Endothelial cell of umbilical vein (primary cell): ENCODE measurements at regions of chr15 and their contacts with region 1.

Region 1: DNA sequence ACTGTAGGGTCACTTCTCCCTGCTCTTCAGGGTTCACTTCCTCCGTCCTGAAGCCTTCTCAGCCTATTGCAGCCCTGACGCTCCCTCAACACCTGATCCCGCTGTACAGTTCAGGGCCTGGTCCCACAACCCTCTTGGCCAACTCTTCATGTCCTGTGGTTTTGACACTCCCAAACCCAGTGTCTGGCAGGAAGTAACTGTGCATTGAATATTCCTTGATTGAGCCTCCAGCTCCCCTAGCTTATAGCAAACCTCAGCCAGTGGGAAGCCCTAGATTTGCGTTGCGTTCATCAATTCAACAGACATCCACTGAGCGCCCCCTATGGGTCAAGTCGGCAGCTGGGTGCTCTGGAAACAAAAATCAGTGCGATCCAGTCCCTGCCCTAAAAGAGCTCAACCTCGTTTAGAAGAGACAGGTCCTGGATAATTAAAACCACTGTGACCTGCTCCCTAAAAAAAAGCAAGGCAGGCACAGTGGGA is 13.5 kb downstream of the UBAP1L start:
- DNase-seq: peak; percentile 53
- H3K4me3 ChIP-seq: peak overlapping the region in 1 of 3 experiments; percentile 13
- H3K27ac ChIP-seq: no peak overlapping the region
- H3K4me1 ChIP-seq: peaks cover 2% of the 10 kb centered on the region
- H3K27me3 ChIP-seq: no peaks in the 10 kb centered on the region
- CTCF ChIP-seq: peak; percentile 82 to 87
- POLR2A ChIP-seq: no peak

Region 2: GRCh38 chr15:64825431-64826294 is 275.8 kb before region 1 on chr15 and contains the start of gene PIF1:
- CTCF ChIA-PET with region 1: no interaction called
- POLR2A ChIA-PET with region 1: interaction called, 10 read pairs
- dilution Hi-C with region 1: no loop called
- intact Hi-C with region 1: no loop called
- DNase-seq: peak; percentile 97
- H3K4me3 ChIP-seq: peak within 1 kb of the TSS; percentile 46 to 84 (median 73)
- H3K27ac ChIP-seq: peak within 1 kb of the TSS; percentile 48
- H3K4me1 ChIP-seq: peaks cover 15% of the 10 kb centered on the region
- H3K27me3 ChIP-seq: no peaks in the 10 kb centered on the region
- CTCF ChIP-seq: peak in 1 of 2 donors; percentile 4
- POLR2A ChIP-seq: peak; percentile 67
- total RNA-seq, gene PIF1: 45.4 and 52.7 TPM in 2 replicates

Region 3: GRCh38 chr15:64893481-64894394 is 207.7 kb before region 1 on chr15:
- CTCF ChIA-PET with region 1: no interaction called
- POLR2A ChIA-PET with region 1: no interaction called
- dilution Hi-C with region 1: no loop called
- intact Hi-C with region 1: no loop called
- DNase-seq: peak; percentile 98
- H3K4me3 ChIP-seq: peak overlapping the region in 2 of 3 experiments; percentile 20 to 24
- H3K27ac ChIP-seq: peak overlapping the region; percentile 72
- H3K4me1 ChIP-seq: peaks cover 44% of the 10 kb centered on the region
- H3K27me3 ChIP-seq: no peaks in the 10 kb centered on the region
- CTCF ChIP-seq: no peak
- POLR2A ChIP-seq: peak; percentile 69

Region 4: GRCh38 chr15:65049418-65049840 is 52.0 kb before region 1 on chr15:
- CTCF ChIA-PET with region 1: interaction called, 59 read pairs
- POLR2A ChIA-PET with region 1: no interaction called
- dilution Hi-C with region 1: no loop called
- intact Hi-C with region 1: loop called (anchors 1 kb)
- DNase-seq: peak; percentile 92
- H3K4me3 ChIP-seq: peak overlapping the region; percentile 2 to 35 (median 22)
- H3K27ac ChIP-seq: no peak overlapping the region
- H3K4me1 ChIP-seq: peaks cover 11% of the 10 kb centered on the region
- H3K27me3 ChIP-seq: no peaks in the 10 kb centered on the region
- CTCF ChIP-seq: no peak
- POLR2A ChIP-seq: no peak

Region 5: DNA sequence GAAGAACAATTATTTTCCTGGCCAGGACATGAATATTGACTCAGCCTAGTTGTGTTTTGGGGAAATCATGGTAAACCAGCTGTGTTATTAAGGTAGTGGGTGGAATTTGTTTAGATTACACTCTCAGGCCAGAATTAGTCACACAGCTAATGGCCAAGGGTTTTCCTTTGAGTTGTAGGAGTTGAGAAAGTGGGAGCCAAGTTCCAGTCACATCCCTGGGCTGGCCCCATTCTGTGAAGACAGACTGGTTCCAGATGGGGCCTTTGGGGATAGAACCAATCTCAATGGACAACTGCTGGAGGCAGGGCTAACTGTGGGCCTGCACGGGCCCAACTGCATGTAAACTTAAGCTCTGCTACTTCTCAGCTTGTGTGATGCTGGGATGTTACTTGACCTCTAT is 32.3 kb before region 1 on chr15:
- CTCF ChIA-PET with region 1: interaction called, 13 read pairs
- POLR2A ChIA-PET with region 1: no interaction called
- dilution Hi-C with region 1: no loop called
- intact Hi-C with region 1: no loop called
- DNase-seq: no peak
- H3K4me3 ChIP-seq: no peak overlapping the region
- H3K27ac ChIP-seq: no peak overlapping the region
- H3K4me1 ChIP-seq: no peaks in the 10 kb centered on the region
- H3K27me3 ChIP-seq: peaks cover 31 to 41% of the 10 kb centered on the region in 2 experiments
- CTCF ChIP-seq: no peak
- POLR2A ChIP-seq: no peak

Region 6: DNA sequence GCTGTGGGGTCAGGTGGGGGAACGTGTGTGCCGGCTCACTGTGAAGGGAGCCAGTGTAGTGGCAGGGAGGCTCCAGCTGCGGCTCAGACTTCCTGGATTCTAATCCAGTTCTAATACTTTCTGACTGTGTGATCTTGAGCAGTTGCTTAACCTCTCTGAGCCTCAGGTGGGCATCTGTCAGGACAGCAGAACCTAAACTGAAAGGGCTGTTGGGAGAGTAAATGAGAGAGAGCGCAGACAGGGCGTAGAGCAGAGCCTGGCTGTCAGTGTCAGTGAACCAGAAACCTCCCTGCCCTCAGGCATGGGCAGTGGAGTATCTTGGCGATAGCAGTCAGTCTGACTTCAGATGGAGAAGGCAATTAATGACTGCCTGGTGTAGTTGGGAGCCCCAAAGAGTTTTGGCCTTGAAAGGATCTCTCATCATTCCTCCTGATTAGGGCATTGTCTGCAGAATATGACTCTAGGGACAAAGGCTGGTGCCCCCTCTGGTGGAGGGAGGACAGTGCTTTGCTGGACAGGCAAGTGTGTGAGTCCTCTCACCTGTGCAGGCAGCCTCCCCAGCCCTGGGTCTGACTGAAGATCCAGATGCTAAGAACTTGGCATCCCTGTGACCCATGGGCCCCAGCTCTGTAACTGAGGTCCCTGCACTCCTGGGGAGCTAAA is 15.3 kb before region 1 on chr15:
- CTCF ChIA-PET with region 1: interaction called, 64 read pairs
- POLR2A ChIA-PET with region 1: no interaction called
- dilution Hi-C with region 1: no loop called
- intact Hi-C with region 1: no loop called
- DNase-seq: peak; percentile 18
- H3K4me3 ChIP-seq: no peak overlapping the region
- H3K27ac ChIP-seq: no peak overlapping the region
- H3K4me1 ChIP-seq: no peaks in the 10 kb centered on the region
- H3K27me3 ChIP-seq: peaks cover 28 to 29% of the 10 kb centered on the region in 2 experiments
- CTCF ChIP-seq: peak; percentile 20 to 57
- POLR2A ChIP-seq: no peak